ENCODE measurements at regions of chr22 and their contacts with region 1.

Region 1: GRCh38 chr22:27512283-27512761 is 289.2 kb downstream of the MN1 start:
- DNase-seq: peak in 1 of 2 donors; percentile 94
- H3K4me3 ChIP-seq: no peak overlapping the region
- H3K27ac ChIP-seq: peak overlapping the region; percentile 58 to 80
- H3K4me1 ChIP-seq: peaks cover 6 to 31% of the 10 kb centered on the region in 2 donors
- H3K27me3 ChIP-seq: no peaks in the 10 kb centered on the region
- CTCF ChIP-seq: no peak

Region 2: GRCh38 chr22:26903030-26903856 is 609.1 kb before region 1 on chr22:
- intact Hi-C with region 1: no loop called
- DNase-seq: no peak
- H3K4me3 ChIP-seq: peak overlapping the region in 1 of 2 donors; percentile 21
- H3K27ac ChIP-seq: no peak overlapping the region
- H3K4me1 ChIP-seq: no peaks in the 10 kb centered on the region
- H3K27me3 ChIP-seq: no peaks in the 10 kb centered on the region
- CTCF ChIP-seq: no peak

Region 3: GRCh38 chr22:27107824-27108223 is 404.5 kb before region 1 on chr22:
- intact Hi-C with region 1: loop called (anchors 10 kb)
- DNase-seq: peak; percentile 21 to 90
- H3K4me3 ChIP-seq: no peak overlapping the region
- H3K27ac ChIP-seq: peak overlapping the region; percentile 68 to 76
- H3K4me1 ChIP-seq: peaks cover 11 to 60% of the 10 kb centered on the region in 2 donors
- H3K27me3 ChIP-seq: no peaks in the 10 kb centered on the region
- CTCF ChIP-seq: no peak

Region 4: GRCh38 chr22:27420817-27421361 is 91.4 kb before region 1 on chr22:
- intact Hi-C with region 1: loop called (anchors 5 kb)
- DNase-seq: peak; percentile 47 to 93
- H3K4me3 ChIP-seq: peak overlapping the region; percentile 18 to 38
- H3K27ac ChIP-seq: peak overlapping the region; percentile 76 to 87
- H3K4me1 ChIP-seq: peaks cover 0 to 17% of the 10 kb centered on the region in 2 donors
- H3K27me3 ChIP-seq: no peaks in the 10 kb centered on the region
- CTCF ChIP-seq: no peak

Region 5: GRCh38 chr22:27461470-27461869 is 50.9 kb before region 1 on chr22:
- intact Hi-C with region 1: loop called (anchors 2 kb)
- DNase-seq: peak in 1 of 2 donors; percentile 76
- H3K4me3 ChIP-seq: no peak overlapping the region
- H3K27ac ChIP-seq: peak overlapping the region; percentile 62 to 80
- H3K4me1 ChIP-seq: peaks cover 0 to 34% of the 10 kb centered on the region in 2 donors
- H3K27me3 ChIP-seq: no peaks in the 10 kb centered on the region
- CTCF ChIP-seq: no peak

Region 6: GRCh38 chr22:29184849-29185490 is 1672.6 kb after region 1 on chr22:
- intact Hi-C with region 1: no loop called
- DNase-seq: no peak
- H3K4me3 ChIP-seq: no peak overlapping the region
- H3K27ac ChIP-seq: no peak overlapping the region
- H3K4me1 ChIP-seq: no peaks in the 10 kb centered on the region
- H3K27me3 ChIP-seq: no peaks in the 10 kb centered on the region
- CTCF ChIP-seq: no peak